SK-MEL-5 (cell line): ENCODE measurements at regions of chr13 and their contacts with region 1.

Region 1: DNA sequence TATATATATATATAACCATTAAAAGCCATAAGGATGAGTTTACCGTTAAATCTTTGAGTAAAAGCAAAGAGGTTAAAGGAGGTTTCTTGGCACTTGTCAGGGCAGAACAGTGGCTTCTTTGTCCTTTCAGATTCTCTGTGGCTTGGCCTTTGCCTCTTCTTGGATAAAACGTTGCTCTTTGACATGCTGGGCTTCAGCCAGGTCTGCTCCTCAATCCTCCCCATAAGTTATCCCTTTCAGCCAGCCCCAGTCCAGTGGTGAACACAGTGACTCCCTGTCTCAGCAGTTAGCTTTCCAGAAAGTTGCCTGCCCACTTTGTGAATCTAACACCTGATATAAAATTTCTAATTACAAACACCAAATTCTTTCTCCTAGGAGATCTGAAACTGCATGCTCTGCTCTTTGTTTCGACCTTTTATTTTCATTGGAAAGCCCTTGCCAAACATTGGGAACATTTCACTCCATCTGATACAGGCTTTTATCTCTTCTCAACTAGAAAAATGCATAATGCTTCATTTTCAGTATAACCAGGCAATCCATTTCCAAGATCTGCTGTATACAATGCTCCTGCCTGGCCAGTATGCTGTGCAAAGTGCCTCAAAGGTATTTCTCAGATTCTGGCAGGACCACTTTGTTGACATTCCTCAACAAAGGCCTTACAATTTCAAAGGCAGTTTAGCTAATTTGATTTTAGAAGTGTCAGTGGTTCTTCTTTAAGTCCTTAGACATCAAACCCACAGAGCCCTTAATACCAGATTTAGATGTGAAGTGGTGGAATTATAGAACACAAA is 16.2 kb upstream of the MED4 start:
- DNase-seq: peak; percentile 95

Region 2: DNA sequence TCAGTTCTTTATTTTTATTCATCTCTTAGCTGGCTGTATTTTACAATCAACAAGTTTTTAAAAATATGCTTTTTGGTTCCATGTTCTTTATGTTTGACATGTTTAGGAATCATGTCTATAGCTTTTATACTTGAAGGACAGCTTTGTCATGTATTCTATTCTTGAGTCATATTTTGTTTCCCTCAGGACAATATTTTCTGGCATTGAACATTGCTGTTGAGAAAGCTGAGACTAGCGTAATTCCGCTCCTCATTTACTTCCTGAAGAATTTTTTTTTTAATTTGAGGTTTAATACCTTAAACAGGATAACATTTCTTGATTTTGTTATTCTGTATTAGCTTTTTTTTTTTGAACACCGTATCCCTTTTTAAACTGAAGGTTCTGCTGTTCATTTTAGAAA is 245.6 kb after region 1 on chr13:
- in situ Hi-C with region 1: no loop called
- DNase-seq: no peak

Region 3: GRCh38 chr13:48500652-48501197 is 389.6 kb after region 1 on chr13:
- in situ Hi-C with region 1: no loop called
- DNase-seq: no peak

Region 4: DNA sequence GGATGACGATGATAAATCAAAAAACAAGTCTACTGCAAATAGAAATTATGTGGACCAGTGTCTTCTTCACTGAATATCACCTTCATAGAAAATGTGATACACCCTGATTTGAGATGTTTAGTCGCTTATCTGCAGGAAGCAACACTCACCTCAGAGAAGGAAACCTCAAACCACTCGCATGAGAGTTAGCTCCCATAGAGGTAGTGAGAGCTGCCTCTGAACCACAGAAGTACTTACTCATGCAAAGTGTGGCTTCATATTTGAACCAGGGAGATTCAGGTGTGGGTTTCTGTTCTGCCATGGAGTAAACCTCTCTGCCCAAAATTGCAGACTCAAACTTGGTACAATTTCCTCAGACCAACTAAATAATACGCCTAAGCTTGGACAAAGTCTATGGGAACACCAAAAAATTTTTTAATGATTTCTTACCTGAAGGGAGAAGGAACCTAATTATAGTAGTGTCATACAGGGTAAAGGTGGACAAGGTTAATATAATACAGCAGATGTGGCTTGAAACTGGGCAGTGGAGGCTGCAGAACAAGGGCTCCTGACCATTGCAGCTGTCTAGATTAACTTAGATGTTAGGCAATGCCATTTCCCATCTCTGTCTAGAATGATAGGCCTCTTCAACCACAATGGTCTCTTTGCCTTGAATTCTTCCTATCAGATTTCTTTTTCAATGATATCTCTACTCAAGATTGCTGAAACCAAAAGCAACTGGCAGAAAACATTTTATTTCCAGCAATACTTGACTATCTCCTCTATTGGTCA is 451.4 kb after region 1 on chr13:
- in situ Hi-C with region 1: loop called (anchors 25 kb)
- DNase-seq: no peak